ENCODE measurements at regions of chr12 and their contacts with region 1.

Region 1: GRCh38 chr12:117850048-117850447 is 118.7 kb downstream of the KSR2 start:
- DNase-seq: peak; percentile 80
- ATAC-seq: peak; percentile 35
- H3K4me3 ChIP-seq: no peak overlapping the region
- H3K27ac ChIP-seq: no peak overlapping the region
- H3K4me1 ChIP-seq: peaks cover 21% of the 10 kb centered on the region
- H3K27me3 ChIP-seq: no peaks in the 10 kb centered on the region
- CTCF ChIP-seq: peak; percentile 97

Region 2: DNA sequence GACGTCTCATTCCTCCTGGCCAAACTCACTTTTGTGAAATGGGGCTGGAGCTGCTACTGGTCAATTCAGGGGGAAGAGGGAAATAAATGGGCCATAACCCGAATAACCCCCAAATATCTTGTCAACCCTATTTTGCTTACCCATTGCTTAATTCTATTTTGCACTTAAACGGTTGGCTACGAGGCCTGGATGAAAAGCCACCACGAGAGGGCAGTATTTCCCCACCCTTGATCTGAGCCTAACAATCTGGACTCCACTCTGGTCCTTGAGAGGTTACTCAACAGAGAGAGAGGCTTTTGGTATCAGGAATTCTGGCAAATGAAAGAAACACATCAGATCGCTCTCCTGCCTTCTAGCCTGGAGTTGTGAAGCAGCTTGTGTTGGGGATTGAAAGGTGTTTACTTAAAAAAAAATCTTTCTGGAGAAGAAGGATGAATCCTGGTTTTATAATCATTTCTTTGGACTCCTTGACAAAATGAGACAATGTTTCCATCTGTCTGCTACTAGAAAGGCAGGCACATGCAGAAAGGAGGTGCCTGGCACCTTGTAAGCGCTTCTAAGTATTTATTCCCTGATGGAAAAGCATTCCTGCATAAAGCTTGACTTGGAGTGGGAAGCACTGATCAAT is 637.4 kb before region 1 on chr12:
- CTCF ChIA-PET with region 1: no interaction called
- POLR2A ChIA-PET with region 1: no interaction called
- intact Hi-C with region 1: loop called (anchors 1 kb)
- DNase-seq: peak; percentile 91
- ATAC-seq: peak; percentile 92
- H3K4me3 ChIP-seq: no peak overlapping the region
- H3K27ac ChIP-seq: no peak overlapping the region
- H3K4me1 ChIP-seq: peaks cover 8% of the 10 kb centered on the region
- H3K27me3 ChIP-seq: peaks cover 25% of the 10 kb centered on the region
- CTCF ChIP-seq: peak; percentile 99

Region 3: DNA sequence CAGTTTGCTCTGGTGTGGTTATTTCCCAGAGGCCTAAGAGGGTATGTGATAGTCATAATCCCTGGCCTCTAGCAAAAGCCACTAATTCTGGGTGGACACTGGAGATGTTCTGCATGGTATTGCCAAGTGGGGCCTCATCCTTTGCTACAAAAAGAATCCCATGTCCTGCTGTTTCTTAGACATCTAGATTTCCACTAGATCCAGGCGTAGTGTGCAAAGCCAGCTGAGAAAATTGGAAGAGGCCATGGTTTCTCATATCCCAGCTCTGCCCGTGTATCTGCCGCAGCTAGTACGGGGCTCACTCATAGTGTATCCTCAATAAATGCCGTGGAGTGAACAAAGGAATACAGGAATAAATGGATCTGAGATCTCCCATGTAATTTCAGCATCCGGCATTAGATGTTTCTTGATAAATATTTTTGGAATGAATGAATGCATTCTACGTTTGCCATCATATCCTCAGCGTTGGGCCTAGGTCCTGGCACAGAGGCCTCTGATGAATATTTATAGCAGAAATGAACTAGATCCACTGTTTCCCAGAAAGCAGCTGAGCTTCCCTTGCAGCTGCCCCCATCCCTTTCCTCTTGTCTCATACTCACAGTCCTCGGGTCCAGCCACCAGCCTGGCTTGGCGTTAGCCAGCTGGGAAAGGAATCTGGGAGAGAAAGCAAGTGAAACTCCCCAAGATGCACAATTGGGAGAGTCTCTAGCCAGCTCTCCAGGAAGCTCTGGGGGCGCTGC is 412.4 kb before region 1 on chr12:
- CTCF ChIA-PET with region 1: no interaction called
- POLR2A ChIA-PET with region 1: no interaction called
- intact Hi-C with region 1: loop called (anchors 1 kb)
- DNase-seq: no peak
- ATAC-seq: no peak
- H3K4me3 ChIP-seq: no peak overlapping the region
- H3K27ac ChIP-seq: no peak overlapping the region
- H3K4me1 ChIP-seq: peaks cover 5% of the 10 kb centered on the region; the same call in 1 of the 2 replicates
- H3K27me3 ChIP-seq: no peaks in the 10 kb centered on the region
- CTCF ChIP-seq: no peak

Region 4: DNA sequence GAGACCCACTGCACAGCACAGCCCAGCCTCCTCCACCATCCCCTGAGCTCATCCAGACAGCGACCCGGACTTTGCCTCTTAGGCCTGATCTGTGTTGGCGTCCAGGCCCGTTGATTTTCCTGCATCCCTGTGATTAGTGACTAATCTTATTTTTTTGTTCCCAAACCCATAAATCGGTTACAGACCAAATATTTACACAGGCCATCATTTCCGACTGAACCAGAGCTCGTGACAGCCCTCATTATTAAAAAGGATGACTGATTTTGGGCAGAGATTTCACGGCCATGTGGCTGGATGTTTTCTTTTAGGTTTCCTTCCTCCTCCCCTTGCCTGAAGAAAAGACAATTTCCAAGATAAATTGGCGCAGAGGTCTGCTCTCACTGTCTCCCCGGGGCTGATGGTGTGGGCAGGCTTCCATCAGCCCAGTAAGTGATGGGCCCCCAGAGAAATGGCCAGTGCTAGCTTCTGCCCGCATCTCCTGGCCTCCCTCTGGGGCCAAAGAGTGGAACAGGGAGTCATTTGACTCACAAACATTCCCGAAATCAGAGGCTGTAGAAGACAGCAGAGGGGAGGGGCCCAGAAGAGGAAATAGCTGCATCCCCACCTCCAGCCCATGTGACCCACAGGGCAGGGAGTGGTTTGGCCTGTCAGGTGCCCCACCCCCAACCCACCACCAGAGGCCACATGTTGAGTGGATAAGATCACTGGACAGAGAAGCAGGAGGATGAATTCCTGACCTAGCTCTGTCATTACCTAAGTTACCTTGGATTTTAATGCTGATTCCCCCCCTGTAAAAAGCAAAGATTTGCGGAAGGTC is 164.7 kb before region 1 on chr12:
- CTCF ChIA-PET with region 1: no interaction called
- POLR2A ChIA-PET with region 1: no interaction called
- intact Hi-C with region 1: loop called (anchors 5 kb)
- DNase-seq: peak; percentile 96
- ATAC-seq: peak; percentile 67
- H3K4me3 ChIP-seq: peak overlapping the region; percentile 55
- H3K27ac ChIP-seq: peak overlapping the region; percentile 98
- H3K4me1 ChIP-seq: peaks cover 57% of the 10 kb centered on the region
- H3K27me3 ChIP-seq: no peaks in the 10 kb centered on the region
- CTCF ChIP-seq: no peak

Region 5: GRCh38 chr12:117980607-117981006 is 130.6 kb after region 1 on chr12:
- CTCF ChIA-PET with region 1: no interaction called
- POLR2A ChIA-PET with region 1: no interaction called
- intact Hi-C with region 1: no loop called
- DNase-seq: no peak
- ATAC-seq: no peak
- H3K4me3 ChIP-seq: no peak overlapping the region
- H3K27ac ChIP-seq: no peak overlapping the region
- H3K4me1 ChIP-seq: peaks cover 13% of the 10 kb centered on the region
- H3K27me3 ChIP-seq: no peaks in the 10 kb centered on the region
- CTCF ChIP-seq: no peak

Region 6: DNA sequence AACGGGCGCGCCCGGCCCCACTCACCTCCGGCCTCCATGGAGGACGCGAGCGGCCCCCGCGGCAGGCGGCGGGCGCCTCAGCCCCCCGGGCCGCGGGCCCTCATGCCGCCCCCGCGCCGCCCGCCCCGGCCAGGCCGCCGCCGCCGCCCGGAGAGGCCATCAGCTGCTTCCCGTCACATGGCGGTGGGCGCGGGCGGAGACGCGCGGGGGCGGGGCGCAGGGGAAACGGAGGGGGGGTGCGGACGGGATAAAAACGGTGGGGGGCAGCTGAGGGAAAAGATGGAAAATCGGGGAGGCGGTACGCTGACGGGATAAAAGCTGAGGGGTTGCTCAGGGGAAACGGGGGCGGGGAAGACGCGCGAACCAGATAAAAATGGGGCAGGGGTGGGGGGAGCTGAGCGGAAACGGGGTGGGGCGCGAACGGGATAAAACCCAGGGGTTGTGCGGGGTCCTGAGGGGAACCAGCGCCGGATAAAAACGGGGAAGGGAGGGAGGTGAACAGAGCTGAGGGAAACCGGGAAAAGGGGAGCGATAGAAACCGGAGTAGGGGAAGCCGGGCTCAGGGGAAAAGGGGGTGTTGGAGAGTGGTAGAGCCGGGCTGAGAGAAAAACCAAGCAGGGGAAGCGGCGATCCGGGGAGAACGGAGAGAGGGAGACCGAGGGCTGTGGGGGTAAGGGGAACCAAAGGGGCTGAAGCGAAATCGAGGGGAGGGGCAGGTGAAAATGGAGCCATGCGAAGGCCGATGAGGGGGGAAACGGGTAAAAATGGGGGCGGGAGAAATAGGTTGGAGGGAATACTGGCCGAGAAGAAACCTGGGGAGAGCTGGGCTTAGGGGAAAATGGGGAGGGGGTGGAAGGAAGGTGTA is 211.2 kb after region 1 on chr12 and contains the start of gene WSB2:
- CTCF ChIA-PET with region 1: no interaction called
- POLR2A ChIA-PET with region 1: interaction called, 37 read pairs
- intact Hi-C with region 1: no loop called
- DNase-seq: peak; percentile 41
- ATAC-seq: peak; percentile 6
- H3K4me3 ChIP-seq: peak within 1 kb of the TSS; percentile 93
- H3K27ac ChIP-seq: peak within 1 kb of the TSS; percentile 86
- H3K4me1 ChIP-seq: peaks cover 40% of the 10 kb centered on the region
- H3K27me3 ChIP-seq: no peaks in the 10 kb centered on the region
- CTCF ChIP-seq: no peak
- total RNA-seq, gene WSB2: 166 and 203 TPM in 2 replicates